ENCODE measurements at regions of chr12 and their contacts with region 1.

Region 1: DNA sequence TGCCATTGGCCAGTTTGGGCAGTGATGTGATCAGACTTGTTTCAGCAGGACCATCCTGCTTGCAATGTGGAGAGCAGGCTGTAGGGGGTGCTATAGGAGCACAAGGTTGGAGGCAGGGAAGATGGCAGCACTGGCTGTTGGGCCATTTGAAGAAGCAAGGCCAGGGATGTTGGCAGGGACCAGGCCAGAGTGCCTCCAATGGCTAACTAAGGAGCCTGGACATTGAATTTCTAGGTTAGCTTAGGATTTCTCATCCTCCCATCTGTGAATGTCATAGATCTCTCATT is 23.5 kb downstream of the FGF23 start:
- DNase-seq: peak in 1 of 10 donors; percentile 31
- H3K4me3 ChIP-seq: no peak overlapping the region
- H3K27ac ChIP-seq: peak overlapping the region in 10 of 59 donors; percentile 1 to 53 (median 32)
- H3K27me3 ChIP-seq: no peaks in the 10 kb centered on the region
- CTCF ChIP-seq: peak in 32 of 56 donors; percentile 7 to 50 (median 25)

Region 2: GRCh38 chr12:4526923-4527546 is 171.1 kb after region 1 on chr12:
- intact Hi-C with region 1: loop called (anchors 5 to 10 kb)
- DNase-seq: no peak
- H3K4me3 ChIP-seq: no peak overlapping the region
- H3K27ac ChIP-seq: peak overlapping the region in 5 of 59 donors; percentile 8 to 63 (median 37)
- H3K27me3 ChIP-seq: no peaks in the 10 kb centered on the region
- CTCF ChIP-seq: peak; percentile 42 to 81 (median 66)